Activated B cell treated with CpG ODN at 0.5 μM for 24 hours (primary cell): ENCODE measurements at regions of chr6 and their contacts with region 1.

Region 1: GRCh38 chr6:90144396-90144795 is 152.2 kb downstream of the BACH2 start:
- DNase-seq: no peak
- ATAC-seq: peak; percentile 70
- H3K4me3 Mint-ChIP-seq: peak overlapping the region; percentile 60
- H3K27ac Mint-ChIP-seq: peak overlapping the region; percentile 86
- H3K4me1 Mint-ChIP-seq: peaks cover 79% of the 10 kb centered on the region
- H3K27me3 Mint-ChIP-seq: no peaks in the 10 kb centered on the region
- CTCF ChIP-seq: no peak

Region 2: DNA sequence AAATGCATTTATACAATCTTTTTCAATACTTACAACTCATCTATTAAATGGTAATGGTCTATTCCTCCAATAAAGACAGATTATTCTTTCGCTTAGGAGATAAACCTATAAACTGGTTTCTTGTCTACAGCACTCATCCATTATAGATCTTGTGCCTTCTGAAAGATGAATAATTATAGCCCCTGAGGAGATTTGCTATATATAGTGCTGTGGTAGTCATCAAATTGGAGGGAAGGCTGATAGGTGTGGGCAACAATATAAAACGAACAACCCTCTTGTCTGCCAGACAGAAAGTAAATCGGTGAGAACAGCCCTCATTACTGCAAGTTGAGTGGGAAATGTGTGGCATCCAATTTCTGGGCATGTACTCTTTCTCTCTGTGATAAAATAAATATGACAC is 1685.7 kb before region 1 on chr6:
- CTCF ChIA-PET with region 1: no interaction called
- POLR2A ChIA-PET with region 1: no interaction called
- intact Hi-C with region 1: no loop called
- DNase-seq: no peak
- ATAC-seq: no peak
- H3K4me3 Mint-ChIP-seq: no peak overlapping the region
- H3K27ac Mint-ChIP-seq: no peak overlapping the region
- H3K4me1 Mint-ChIP-seq: no peaks in the 10 kb centered on the region
- H3K27me3 Mint-ChIP-seq: peaks cover 10% of the 10 kb centered on the region
- CTCF ChIP-seq: no peak

Region 3: GRCh38 chr6:89873721-89874120 is 270.7 kb before region 1 on chr6:
- CTCF ChIA-PET with region 1: no interaction called
- POLR2A ChIA-PET with region 1: interaction called, 10 read pairs
- intact Hi-C with region 1: no loop called
- DNase-seq: no peak
- ATAC-seq: no peak
- H3K4me3 Mint-ChIP-seq: no peak overlapping the region
- H3K27ac Mint-ChIP-seq: no peak overlapping the region
- H3K4me1 Mint-ChIP-seq: peaks cover 4% of the 10 kb centered on the region
- H3K27me3 Mint-ChIP-seq: no peaks in the 10 kb centered on the region
- CTCF ChIP-seq: no peak

Region 4: DNA sequence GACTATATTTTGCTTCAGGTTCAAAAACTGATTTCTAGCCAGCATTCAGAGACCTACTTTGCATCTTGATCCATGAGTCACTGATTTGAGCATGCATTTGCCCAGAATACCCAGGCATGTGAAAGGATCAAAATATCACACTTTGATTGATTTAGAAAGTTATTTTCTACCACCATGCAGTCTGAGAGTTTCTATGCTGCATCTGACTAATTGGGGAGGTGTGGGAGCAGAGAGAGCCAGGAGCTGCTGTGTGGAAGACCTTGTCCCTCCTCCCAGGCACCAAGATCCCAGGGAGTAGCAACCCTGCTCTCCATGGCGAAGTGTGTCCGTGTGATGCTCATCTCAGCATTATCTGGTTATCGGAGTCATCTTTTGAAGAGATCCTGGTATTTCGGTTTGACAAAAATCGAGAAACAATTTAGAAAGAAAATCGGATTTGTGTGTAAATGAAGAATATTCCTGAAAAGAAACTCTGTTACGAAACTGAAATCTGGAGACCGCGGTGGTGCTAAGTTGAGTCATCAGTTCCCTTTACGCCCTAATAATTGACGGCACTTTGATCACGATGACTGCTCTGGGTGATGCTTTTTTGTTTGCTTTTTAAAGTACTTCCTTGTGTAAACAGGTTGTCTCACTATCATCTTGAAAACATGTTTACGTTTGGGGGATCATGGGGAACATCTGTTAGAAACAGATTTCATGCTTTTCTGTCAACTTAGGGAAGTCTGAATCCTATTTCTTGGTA is 41.2 kb before region 1 on chr6:
- CTCF ChIA-PET with region 1: no interaction called
- POLR2A ChIA-PET with region 1: no interaction called
- intact Hi-C with region 1: loop called (anchors 2 kb)
- DNase-seq: no peak
- ATAC-seq: peak; percentile 47
- H3K4me3 Mint-ChIP-seq: peak overlapping the region; percentile 78
- H3K27ac Mint-ChIP-seq: peak overlapping the region; percentile 74
- H3K4me1 Mint-ChIP-seq: peaks cover 97% of the 10 kb centered on the region
- H3K27me3 Mint-ChIP-seq: no peaks in the 10 kb centered on the region
- CTCF ChIP-seq: no peak

Region 5: GRCh38 chr6:90131614-90132423 is 12.6 kb before region 1 on chr6:
- CTCF ChIA-PET with region 1: no interaction called
- POLR2A ChIA-PET with region 1: interaction called, 3 read pairs
- intact Hi-C with region 1: loop called (anchors 1 kb)
- DNase-seq: no peak
- ATAC-seq: no peak
- H3K4me3 Mint-ChIP-seq: no peak overlapping the region
- H3K27ac Mint-ChIP-seq: peak overlapping the region; percentile 83
- H3K4me1 Mint-ChIP-seq: peaks cover 61% of the 10 kb centered on the region
- H3K27me3 Mint-ChIP-seq: no peaks in the 10 kb centered on the region
- CTCF ChIP-seq: no peak

Region 6: DNA sequence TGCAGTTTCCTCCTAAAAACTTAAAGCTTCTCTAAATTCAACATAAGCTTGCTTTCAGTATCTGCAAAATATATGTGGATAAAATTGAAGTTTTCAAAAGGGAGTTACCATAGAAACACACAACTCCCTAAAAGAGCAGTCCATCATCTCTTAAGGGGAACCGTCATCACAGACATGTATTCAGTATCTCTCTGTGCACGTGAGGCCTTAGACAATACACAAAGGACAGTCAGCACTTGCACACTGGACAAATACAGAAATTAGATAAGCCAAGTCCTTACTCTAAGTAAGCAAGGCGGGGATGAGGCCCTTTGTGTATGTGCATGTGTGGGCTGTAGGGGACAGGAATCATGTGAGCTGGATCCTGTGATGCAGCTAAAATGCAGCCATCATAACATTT is 15.6 kb after region 1 on chr6:
- CTCF ChIA-PET with region 1: interaction called, 3 read pairs
- POLR2A ChIA-PET with region 1: interaction called, 3 read pairs
- intact Hi-C with region 1: loop called (anchors 1 kb)
- DNase-seq: no peak
- ATAC-seq: peak; percentile 34
- H3K4me3 Mint-ChIP-seq: peak overlapping the region; percentile 13
- H3K27ac Mint-ChIP-seq: peak overlapping the region; percentile 64
- H3K4me1 Mint-ChIP-seq: peaks cover 78% of the 10 kb centered on the region
- H3K27me3 Mint-ChIP-seq: no peaks in the 10 kb centered on the region
- CTCF ChIP-seq: no peak

Region 7: GRCh38 chr6:90168693-90169131 is 24.3 kb after region 1 on chr6:
- CTCF ChIA-PET with region 1: interaction called, 4 read pairs
- POLR2A ChIA-PET with region 1: interaction called, 3 read pairs
- intact Hi-C with region 1: loop called (anchors 2 kb)
- DNase-seq: no peak
- ATAC-seq: no peak
- H3K4me3 Mint-ChIP-seq: no peak overlapping the region
- H3K27ac Mint-ChIP-seq: peak overlapping the region; percentile 12
- H3K4me1 Mint-ChIP-seq: peaks cover 73% of the 10 kb centered on the region
- H3K27me3 Mint-ChIP-seq: no peaks in the 10 kb centered on the region
- CTCF ChIP-seq: no peak